Activated T-helper 2 cell treated with anti-CD3 and anti-CD28 coated beads, Interferon-gamma antibody, Interleukin-2, Interleukin-4, amounts not matched to agents 10 μg/mL and 5 μg/mL and 100 μg/mL, durations not matched to agents 14 hours and 24 hours and 36 hours (primary cell): ENCODE measurements at regions of chr18 and their contacts with region 1.

Region 1: DNA sequence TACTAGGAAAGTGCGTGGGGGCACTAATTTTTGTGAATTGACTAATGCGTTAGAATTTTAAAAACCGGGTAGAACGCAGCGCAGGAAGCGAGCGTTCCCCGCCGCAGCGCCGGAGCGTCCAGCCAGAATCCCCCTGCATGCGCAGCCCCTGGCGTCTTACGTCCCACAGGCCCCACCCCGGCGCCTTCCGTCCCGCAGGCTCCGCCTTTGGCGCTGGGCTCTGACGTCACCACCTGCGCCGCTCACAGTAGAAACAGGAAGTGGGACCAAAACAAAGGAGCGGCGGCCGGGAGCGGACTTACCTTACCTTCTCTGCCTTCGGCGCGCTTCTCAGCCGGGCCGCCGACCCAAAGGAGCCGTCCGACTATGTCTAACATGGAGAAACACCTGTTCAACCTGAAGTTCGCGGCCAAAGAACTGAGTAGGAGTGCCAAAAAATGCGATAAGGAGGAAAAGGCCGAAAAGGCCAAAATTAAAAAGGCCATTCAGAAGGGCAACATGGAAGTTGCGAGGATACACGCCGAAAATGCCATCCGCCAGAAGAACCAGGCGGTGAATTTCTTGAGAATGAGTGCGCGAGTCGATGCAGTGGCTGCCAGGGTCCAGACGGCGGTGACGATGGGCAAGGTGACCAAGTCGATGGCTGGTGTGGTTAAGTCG is at the start of gene CHMP1B:
- DNase-seq: peak; percentile 95
- H3K4me3 Mint-ChIP-seq: peak within 1 kb of the TSS; percentile 100
- H3K27ac Mint-ChIP-seq: peak within 1 kb of the TSS; percentile 100
- H3K4me1 Mint-ChIP-seq: peaks cover 28% of the 10 kb centered on the region
- H3K27me3 Mint-ChIP-seq: no peaks in the 10 kb centered on the region
- total RNA-seq, gene CHMP1B: 27.3 and 28.3 TPM in 2 replicates

Region 2: GRCh38 chr18:11761553-11761952 is 89.7 kb before region 1 on chr18:
- intact Hi-C with region 1: loop called (anchors 10 kb)
- DNase-seq: no peak
- H3K4me3 Mint-ChIP-seq: no peak overlapping the region
- H3K27ac Mint-ChIP-seq: no peak overlapping the region
- H3K4me1 Mint-ChIP-seq: no peaks in the 10 kb centered on the region
- H3K27me3 Mint-ChIP-seq: peaks cover 11% of the 10 kb centered on the region

Region 3: GRCh38 chr18:11908182-11909060 is 57.1 kb after region 1 on chr18 and contains the start of gene MPPE1:
- intact Hi-C with region 1: loop called (anchors 2 kb)
- DNase-seq: peak; percentile 86
- H3K4me3 Mint-ChIP-seq: peak within 1 kb of the TSS; percentile 90
- H3K27ac Mint-ChIP-seq: peak within 1 kb of the TSS; percentile 87
- H3K4me1 Mint-ChIP-seq: peaks cover 22% of the 10 kb centered on the region
- H3K27me3 Mint-ChIP-seq: no peaks in the 10 kb centered on the region
- total RNA-seq, gene MPPE1: 37.5 and 40.6 TPM in 2 replicates

Region 4: DNA sequence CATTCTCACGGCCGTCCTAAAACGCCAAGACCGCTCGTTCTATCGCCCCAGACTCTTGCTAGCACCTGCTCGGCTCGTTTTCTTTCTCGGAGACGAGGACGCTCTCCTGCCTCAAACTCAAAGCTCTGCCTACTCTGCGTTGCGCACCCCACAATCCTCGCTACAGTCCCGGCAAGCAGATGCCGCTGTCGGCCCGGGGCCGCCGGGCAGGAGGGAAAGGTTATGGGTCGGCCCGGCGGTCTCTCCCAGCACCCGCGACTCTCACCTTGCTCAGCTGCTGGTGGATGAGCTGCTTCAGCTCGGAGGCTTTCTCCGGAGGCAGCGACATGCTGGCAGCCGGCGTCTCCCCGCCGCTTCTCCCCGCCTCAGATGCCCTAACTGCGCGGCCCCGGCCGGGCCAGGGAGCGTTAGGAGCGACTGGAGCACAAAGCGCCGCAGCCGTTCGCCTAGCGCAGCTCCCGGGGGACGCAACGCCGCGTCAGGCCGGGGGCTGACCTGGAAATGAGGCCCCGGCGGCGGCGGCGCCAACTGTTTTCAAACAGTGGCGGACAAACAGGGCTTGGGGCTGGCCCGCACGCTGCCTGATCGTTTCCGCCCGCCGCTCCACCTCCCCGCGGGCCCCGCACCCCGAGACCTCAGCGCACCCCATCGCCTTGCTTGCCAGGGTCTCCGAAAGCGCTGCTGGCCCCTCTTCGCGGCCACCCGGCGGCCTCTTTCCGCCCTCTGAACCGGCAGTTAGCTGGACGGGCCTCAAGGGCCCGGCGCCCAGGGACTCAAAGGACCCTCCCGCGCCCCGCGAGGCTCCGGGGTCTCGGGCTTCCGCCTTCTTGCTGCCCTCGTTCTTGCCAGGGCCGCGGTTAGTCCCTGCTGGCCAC is 851.2 kb after region 1 on chr18 and contains the starts of genes CEP76 and PSMG2:
- intact Hi-C with region 1: loop called (anchors 5 kb)
- DNase-seq: peak; percentile 81
- H3K4me3 Mint-ChIP-seq: peak within 1 kb of the TSS; percentile 100
- H3K27ac Mint-ChIP-seq: peak within 1 kb of the TSS; percentile 99
- H3K4me1 Mint-ChIP-seq: peaks cover 31% of the 10 kb centered on the region
- H3K27me3 Mint-ChIP-seq: no peaks in the 10 kb centered on the region
- total RNA-seq, gene CEP76: 14.5 and 17.6 TPM in 2 replicates
- total RNA-seq, gene PSMG2: 105 and 107 TPM in 2 replicates